HCT116 (cell line): ENCODE measurements at regions of chr12 and their contacts with region 1.

Region 1: GRCh38 chr12:59087077-59087673 is 166.9 kb upstream of the LRIG3 start:
- DNase-seq: peak; percentile 3
- ATAC-seq: no peak
- H3K4me3 ChIP-seq: no peak overlapping the region
- H3K27ac ChIP-seq: no peak overlapping the region
- H3K4me1 ChIP-seq: no peaks in the 10 kb centered on the region
- H3K27me3 ChIP-seq: no peaks in the 10 kb centered on the region
- CTCF ChIP-seq: peak; percentile 38 to 67 (median 46); a peak in 4 of 6 replicates
- POLR2A ChIP-seq: no peak
- RAD21 ChIP-seq: peak; percentile 76

Region 2: GRCh38 chr12:58346032-58346632 is 741.0 kb before region 1 on chr12:
- CTCF ChIA-PET with region 1: no interaction called
- POLR2A ChIA-PET with region 1: no interaction called
- RAD21 ChIA-PET with region 1: no interaction called
- intact Hi-C with region 1: loop called (anchors 2 kb)
- DNase-seq: peak; percentile 12
- ATAC-seq: peak; percentile 77
- H3K4me3 ChIP-seq: no peak overlapping the region
- H3K27ac ChIP-seq: no peak overlapping the region
- H3K4me1 ChIP-seq: no peaks in the 10 kb centered on the region
- H3K27me3 ChIP-seq: no peaks in the 10 kb centered on the region
- CTCF ChIP-seq: peak; percentile 70 to 79 (median 78)
- POLR2A ChIP-seq: no peak
- RAD21 ChIP-seq: peak; percentile 77

Region 3: GRCh38 chr12:58540480-58541299 is 546.5 kb before region 1 on chr12:
- CTCF ChIA-PET with region 1: interaction called, 30 read pairs
- POLR2A ChIA-PET with region 1: no interaction called
- RAD21 ChIA-PET with region 1: interaction called in 1 of 2 experiments, 4 read pairs
- intact Hi-C with region 1: loop called (anchors 1 kb)
- DNase-seq: peak; percentile 59
- ATAC-seq: peak; percentile 100
- H3K4me3 ChIP-seq: no peak overlapping the region
- H3K27ac ChIP-seq: no peak overlapping the region
- H3K4me1 ChIP-seq: no peaks in the 10 kb centered on the region
- H3K27me3 ChIP-seq: no peaks in the 10 kb centered on the region
- CTCF ChIP-seq: peak; percentile 70 to 83 (median 78); a peak in 5 of 6 replicates
- POLR2A ChIP-seq: no peak
- RAD21 ChIP-seq: peak; percentile 87

Region 4: DNA sequence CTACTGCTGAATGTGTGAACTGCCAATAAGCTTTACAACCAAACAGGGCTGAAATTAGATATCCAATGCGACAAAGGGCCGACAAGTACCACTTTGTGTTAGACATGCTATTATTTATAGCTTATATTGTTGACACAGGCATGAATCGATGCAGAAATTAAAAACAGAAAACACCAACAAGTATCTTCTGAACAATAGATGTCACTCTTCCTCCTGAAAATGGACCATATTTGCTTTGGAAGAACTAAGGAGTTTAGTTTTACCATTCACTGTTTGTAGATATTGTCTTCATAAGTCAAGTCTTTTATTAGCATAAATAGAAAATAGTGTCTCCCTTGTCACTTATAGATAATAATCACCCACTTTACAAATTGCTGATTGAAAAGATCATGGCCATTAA is 253.3 kb before region 1 on chr12:
- CTCF ChIA-PET with region 1: no interaction called
- POLR2A ChIA-PET with region 1: no interaction called
- RAD21 ChIA-PET with region 1: no interaction called
- intact Hi-C with region 1: loop called (anchors 10 kb)
- DNase-seq: no peak
- ATAC-seq: no peak
- H3K4me3 ChIP-seq: no peak overlapping the region
- H3K27ac ChIP-seq: no peak overlapping the region
- H3K4me1 ChIP-seq: no peaks in the 10 kb centered on the region
- H3K27me3 ChIP-seq: no peaks in the 10 kb centered on the region
- CTCF ChIP-seq: no peak
- POLR2A ChIP-seq: no peak
- RAD21 ChIP-seq: peak; percentile 41; the same call in 1 of the 2 replicates

Region 5: DNA sequence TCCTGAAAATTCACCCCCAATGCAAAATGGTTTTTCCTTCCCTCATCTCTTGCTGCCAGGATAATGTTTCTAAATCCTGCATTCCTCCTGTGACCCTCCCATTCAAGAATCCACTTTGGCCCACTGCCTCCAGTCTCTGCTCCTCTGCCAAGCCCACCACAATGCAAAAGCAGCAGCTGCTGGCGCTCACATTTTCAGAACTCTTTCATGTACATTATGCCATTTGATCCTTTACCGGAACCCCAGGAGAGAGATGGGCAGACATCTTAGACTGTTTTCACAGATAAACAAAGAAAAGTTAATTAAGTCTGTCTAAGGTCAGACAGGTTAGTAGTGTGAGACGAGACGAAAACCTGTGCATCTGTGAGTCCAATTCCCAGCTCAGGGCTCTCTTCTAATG is 179.8 kb before region 1 on chr12:
- CTCF ChIA-PET with region 1: no interaction called
- POLR2A ChIA-PET with region 1: no interaction called
- RAD21 ChIA-PET with region 1: no interaction called
- intact Hi-C with region 1: loop called (anchors 5 kb)
- DNase-seq: no peak
- ATAC-seq: no peak
- H3K4me3 ChIP-seq: no peak overlapping the region
- H3K27ac ChIP-seq: no peak overlapping the region
- H3K4me1 ChIP-seq: no peaks in the 10 kb centered on the region
- H3K27me3 ChIP-seq: no peaks in the 10 kb centered on the region
- CTCF ChIP-seq: no peak
- POLR2A ChIP-seq: no peak
- RAD21 ChIP-seq: no peak

Region 6: GRCh38 chr12:59070322-59070933 is 16.7 kb before region 1 on chr12:
- CTCF ChIA-PET with region 1: no interaction called
- POLR2A ChIA-PET with region 1: no interaction called
- RAD21 ChIA-PET with region 1: no interaction called
- intact Hi-C with region 1: no loop called
- DNase-seq: no peak
- ATAC-seq: no peak
- H3K4me3 ChIP-seq: no peak overlapping the region
- H3K27ac ChIP-seq: no peak overlapping the region
- H3K4me1 ChIP-seq: no peaks in the 10 kb centered on the region
- H3K27me3 ChIP-seq: no peaks in the 10 kb centered on the region
- CTCF ChIP-seq: no peak
- POLR2A ChIP-seq: no peak
- RAD21 ChIP-seq: no peak

Region 7: GRCh38 chr12:59636945-59637691 is 549.9 kb after region 1 on chr12:
- CTCF ChIA-PET with region 1: no interaction called
- POLR2A ChIA-PET with region 1: no interaction called
- RAD21 ChIA-PET with region 1: no interaction called
- intact Hi-C with region 1: no loop called
- DNase-seq: no peak
- ATAC-seq: no peak
- H3K4me3 ChIP-seq: no peak overlapping the region
- H3K27ac ChIP-seq: no peak overlapping the region
- H3K4me1 ChIP-seq: no peaks in the 10 kb centered on the region
- H3K27me3 ChIP-seq: no peaks in the 10 kb centered on the region
- CTCF ChIP-seq: no peak
- POLR2A ChIP-seq: no peak
- RAD21 ChIP-seq: no peak